ENCODE measurements at regions of chr7 and their contacts with region 1.

Region 1: GRCh38 chr7:92833024-92833765 is 3.2 kb downstream of the CDK6 start:
- DNase-seq: peak; percentile 92
- H3K4me3 Mint-ChIP-seq: peak overlapping the region; percentile 89
- H3K27ac Mint-ChIP-seq: peak overlapping the region; percentile 95
- H3K4me1 Mint-ChIP-seq: peaks cover 43% of the 10 kb centered on the region
- H3K27me3 Mint-ChIP-seq: peaks cover 7% of the 10 kb centered on the region

Region 2: GRCh38 chr7:92621026-92621540 is 212.1 kb before region 1 on chr7:
- CTCF ChIA-PET with region 1: interaction called, 89 read pairs
- POLR2A ChIA-PET with region 1: interaction called, 78 read pairs
- DNase-seq: peak; percentile 83
- H3K4me3 Mint-ChIP-seq: peak overlapping the region; percentile 43
- H3K27ac Mint-ChIP-seq: peak overlapping the region; percentile 89
- H3K4me1 Mint-ChIP-seq: peaks cover 60% of the 10 kb centered on the region
- H3K27me3 Mint-ChIP-seq: no peaks in the 10 kb centered on the region

Region 3: DNA sequence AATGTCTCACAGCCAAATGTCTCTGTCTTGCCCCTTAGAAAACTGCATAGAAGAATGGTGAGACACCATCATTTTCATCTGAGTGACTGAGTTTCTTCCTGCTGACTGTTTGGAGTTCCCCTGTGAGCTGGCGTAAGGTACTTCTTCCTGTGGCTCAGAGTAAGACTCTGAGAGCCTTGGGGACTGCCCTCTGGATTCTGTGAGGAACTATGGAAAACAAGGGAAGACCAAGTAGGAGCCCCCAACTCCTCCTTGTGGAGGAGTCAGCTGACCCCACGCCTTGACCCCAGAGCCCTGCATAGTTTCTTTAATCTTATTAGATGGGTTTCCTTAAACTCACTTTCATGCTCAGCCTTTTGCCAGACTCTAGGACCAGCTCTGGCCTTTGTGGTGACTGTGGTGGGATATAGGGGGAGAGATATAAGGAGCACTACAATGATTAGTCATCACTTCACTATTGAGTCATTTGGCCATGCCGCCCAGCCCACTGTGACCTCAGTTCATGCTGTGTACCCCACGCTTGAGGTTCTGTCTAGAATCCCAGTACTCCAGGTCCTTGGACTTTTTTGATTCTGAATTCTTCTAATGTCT is 191.2 kb before region 1 on chr7:
- CTCF ChIA-PET with region 1: interaction called, 6 read pairs
- POLR2A ChIA-PET with region 1: interaction called, 17 read pairs
- DNase-seq: peak; percentile 72
- H3K4me3 Mint-ChIP-seq: peak overlapping the region; percentile 18
- H3K27ac Mint-ChIP-seq: peak overlapping the region; percentile 91
- H3K4me1 Mint-ChIP-seq: peaks cover 88% of the 10 kb centered on the region
- H3K27me3 Mint-ChIP-seq: no peaks in the 10 kb centered on the region

Region 4: GRCh38 chr7:92682903-92683539 is 150.2 kb before region 1 on chr7:
- CTCF ChIA-PET with region 1: interaction called, 19 read pairs
- POLR2A ChIA-PET with region 1: interaction called, 22 read pairs
- DNase-seq: no peak
- H3K4me3 Mint-ChIP-seq: no peak overlapping the region
- H3K27ac Mint-ChIP-seq: peak overlapping the region; percentile 86
- H3K4me1 Mint-ChIP-seq: peaks cover 87% of the 10 kb centered on the region
- H3K27me3 Mint-ChIP-seq: no peaks in the 10 kb centered on the region

Region 5: GRCh38 chr7:92717993-92718716 is 115.0 kb before region 1 on chr7:
- CTCF ChIA-PET with region 1: interaction called, 14 read pairs
- POLR2A ChIA-PET with region 1: interaction called, 11 read pairs
- DNase-seq: peak; percentile 66
- H3K4me3 Mint-ChIP-seq: peak overlapping the region; percentile 77
- H3K27ac Mint-ChIP-seq: peak overlapping the region; percentile 90
- H3K4me1 Mint-ChIP-seq: peaks cover 59% of the 10 kb centered on the region
- H3K27me3 Mint-ChIP-seq: no peaks in the 10 kb centered on the region

Region 6: DNA sequence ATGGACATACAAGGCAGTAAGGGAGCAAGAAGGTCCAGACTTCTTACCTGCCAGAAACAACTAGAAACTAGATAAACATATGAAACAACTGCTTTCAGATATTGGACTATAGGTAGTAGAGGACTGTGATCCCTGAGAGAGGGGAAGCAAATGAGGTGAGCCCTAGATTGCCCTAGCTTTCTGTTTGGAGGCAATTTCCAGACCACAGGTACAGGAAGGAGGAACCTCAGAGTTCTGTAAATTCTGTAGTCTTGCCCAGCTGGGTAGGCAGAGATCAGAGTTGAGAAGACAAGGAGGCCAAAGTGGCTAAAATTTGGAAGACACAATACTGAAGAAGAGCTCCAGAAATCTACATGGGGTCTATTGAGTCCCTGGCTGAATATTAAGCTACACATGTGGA is 17.8 kb before region 1 on chr7:
- CTCF ChIA-PET with region 1: interaction called, 53 read pairs
- POLR2A ChIA-PET with region 1: interaction called, 271 read pairs
- DNase-seq: no peak
- H3K4me3 Mint-ChIP-seq: no peak overlapping the region
- H3K27ac Mint-ChIP-seq: peak overlapping the region; percentile 59
- H3K4me1 Mint-ChIP-seq: peaks cover 92% of the 10 kb centered on the region
- H3K27me3 Mint-ChIP-seq: no peaks in the 10 kb centered on the region